ENCODE measurements at regions of chr14 and their contacts with region 1.

Region 1: DNA sequence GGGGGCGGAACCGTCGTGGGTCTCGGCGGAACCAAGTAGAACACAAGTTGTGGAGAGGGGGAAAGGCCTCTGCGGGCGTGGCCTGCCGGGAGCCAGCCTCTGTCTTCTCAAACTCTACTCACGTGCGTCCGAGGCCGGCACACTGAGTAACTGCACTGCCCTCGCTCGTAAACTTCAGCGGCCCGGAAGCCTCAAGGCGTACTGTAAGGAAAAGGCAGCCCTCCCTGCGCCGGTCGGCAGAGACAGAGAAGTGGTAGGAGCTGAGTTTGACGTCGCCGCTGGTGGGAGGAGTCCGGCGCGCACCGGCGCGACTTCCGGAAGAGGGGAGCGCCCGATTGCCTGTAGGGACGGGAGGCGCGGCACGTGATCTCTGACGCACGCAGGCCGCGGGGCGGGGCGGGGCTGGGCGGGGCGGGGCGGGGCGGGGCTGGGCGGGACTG is at the start of gene FBXO33:
- DNase-seq: peak; percentile 87
- H3K4me3 ChIP-seq: peak within 1 kb of the TSS; percentile 72 to 99 (median 81)
- H3K27ac ChIP-seq: peak within 1 kb of the TSS; percentile 97 to 99 (median 98)
- H3K4me1 ChIP-seq: peaks cover 7 to 48% (median 15%) of the 10 kb centered on the region in 3 donors
- H3K27me3 ChIP-seq: no peaks in the 10 kb centered on the region
- CTCF ChIP-seq: peak in 2 of 6 experiments; percentile 1 to 14
- POLR2A ChIP-seq: peak in 1 of 4 donors; percentile 71
- total RNA-seq, gene FBXO33: 4.8 to 10.1 (median 9.0) TPM

Region 2: DNA sequence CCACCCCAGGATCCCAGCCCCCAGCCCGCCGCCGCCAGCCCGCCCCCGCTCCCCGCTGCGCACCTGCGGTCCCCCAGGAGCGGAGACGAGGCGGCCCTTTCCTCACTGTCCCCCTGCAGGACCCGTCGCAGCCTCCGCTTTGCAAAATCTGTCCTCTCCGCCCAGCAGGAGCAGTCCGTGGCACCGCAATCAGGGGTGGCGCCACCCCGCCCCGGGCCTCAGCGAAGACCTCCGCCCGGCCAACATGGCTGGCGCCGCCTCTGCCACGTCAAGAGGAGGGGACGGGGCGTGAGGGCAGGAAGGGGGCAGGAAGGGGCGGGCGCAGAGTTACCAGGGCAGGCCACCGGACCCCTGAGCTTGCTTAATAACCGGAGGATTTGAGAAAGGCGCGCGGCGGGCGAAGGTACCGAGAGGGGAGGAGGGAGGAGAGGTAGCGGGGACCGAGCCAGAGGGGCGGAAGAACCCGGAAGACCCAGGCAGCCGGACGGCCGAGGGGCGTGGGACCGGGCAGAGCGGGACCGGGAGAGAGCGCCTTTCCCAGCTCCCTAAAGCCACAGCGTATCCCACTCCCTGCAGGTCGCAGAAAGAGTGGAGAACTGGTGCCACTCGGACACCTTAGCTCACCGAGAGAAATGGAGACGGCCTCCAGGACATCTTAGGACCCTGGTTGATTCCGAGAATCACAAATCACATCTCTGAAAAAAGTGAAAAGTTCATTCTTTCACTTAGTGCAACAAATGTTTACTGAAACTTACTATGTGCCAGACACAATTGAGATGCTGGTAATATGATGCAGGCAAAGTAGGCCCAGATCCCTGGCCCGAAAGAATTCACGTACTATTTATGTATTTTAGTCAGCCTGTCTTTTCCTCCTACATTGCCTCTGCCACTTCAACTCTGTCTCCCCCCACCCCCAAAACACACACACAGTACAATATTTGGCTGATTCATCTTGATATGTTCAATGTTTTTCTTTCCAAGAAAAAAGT is 328.9 kb before region 1 on chr14 and contains the start of gene SEC23A:
- intact Hi-C with region 1: loop called (anchors 10 kb)
- DNase-seq: peak; percentile 54
- H3K4me3 ChIP-seq: peak within 1 kb of the TSS; percentile 66 to 97 (median 84)
- H3K27ac ChIP-seq: peak within 1 kb of the TSS; percentile 94 to 100 (median 98)
- H3K4me1 ChIP-seq: peaks cover 7 to 48% (median 8%) of the 10 kb centered on the region in 3 donors
- H3K27me3 ChIP-seq: no peaks in the 10 kb centered on the region
- CTCF ChIP-seq: no peak
- POLR2A ChIP-seq: peak in 3 of 4 donors; percentile 53 to 91 (median 72)
- total RNA-seq, gene SEC23A: 25.1 to 52.5 (median 42.2) TPM

Region 3: GRCh38 chr14:39174560-39175444 is 257.4 kb before region 1 on chr14 and contains the start of gene PNN:
- intact Hi-C with region 1: loop called (anchors 10 kb)
- DNase-seq: peak; percentile 89
- H3K4me3 ChIP-seq: peak within 1 kb of the TSS; percentile 76 to 99 (median 84)
- H3K27ac ChIP-seq: peak within 1 kb of the TSS; percentile 94 to 98 (median 96)
- H3K4me1 ChIP-seq: peaks cover 6 to 42% (median 23%) of the 10 kb centered on the region in 3 donors
- H3K27me3 ChIP-seq: no peaks in the 10 kb centered on the region
- CTCF ChIP-seq: peak in 2 of 6 experiments; percentile 0 to 10
- POLR2A ChIP-seq: peak in 3 of 4 donors; percentile 89 to 96 (median 94)
- total RNA-seq, gene PNN: 16.7 to 43.9 (median 24.8) TPM

Region 4: GRCh38 chr14:39266871-39267591 is 165.2 kb before region 1 on chr14:
- intact Hi-C with region 1: loop called (anchors 5 kb)
- DNase-seq: peak; percentile 37
- H3K4me3 ChIP-seq: peak overlapping the region; percentile 66 to 95 (median 82)
- H3K27ac ChIP-seq: peak overlapping the region; percentile 93 to 99 (median 98)
- H3K4me1 ChIP-seq: peaks cover 4 to 50% (median 20%) of the 10 kb centered on the region in 3 donors
- H3K27me3 ChIP-seq: no peaks in the 10 kb centered on the region
- CTCF ChIP-seq: no peak
- POLR2A ChIP-seq: peak in 2 of 4 donors; percentile 76 to 86

Region 5: GRCh38 chr14:39722547-39723273 is 290.5 kb after region 1 on chr14:
- intact Hi-C with region 1: no loop called
- DNase-seq: no peak
- H3K4me3 ChIP-seq: no peak overlapping the region
- H3K27ac ChIP-seq: no peak overlapping the region
- H3K4me1 ChIP-seq: no peaks in the 10 kb centered on the region
- H3K27me3 ChIP-seq: no peaks in the 10 kb centered on the region
- CTCF ChIP-seq: no peak
- POLR2A ChIP-seq: no peak

Region 6: GRCh38 chr14:40229676-40230075 is 797.5 kb after region 1 on chr14:
- intact Hi-C with region 1: no loop called
- DNase-seq: no peak
- H3K4me3 ChIP-seq: no peak overlapping the region
- H3K27ac ChIP-seq: no peak overlapping the region
- H3K4me1 ChIP-seq: no peaks in the 10 kb centered on the region
- H3K27me3 ChIP-seq: no peaks in the 10 kb centered on the region
- CTCF ChIP-seq: no peak
- POLR2A ChIP-seq: no peak